Heart left ventricle (tissue), 16 donors: ENCODE measurements at regions of chr4 and their contacts with region 1.

Region 1: DNA sequence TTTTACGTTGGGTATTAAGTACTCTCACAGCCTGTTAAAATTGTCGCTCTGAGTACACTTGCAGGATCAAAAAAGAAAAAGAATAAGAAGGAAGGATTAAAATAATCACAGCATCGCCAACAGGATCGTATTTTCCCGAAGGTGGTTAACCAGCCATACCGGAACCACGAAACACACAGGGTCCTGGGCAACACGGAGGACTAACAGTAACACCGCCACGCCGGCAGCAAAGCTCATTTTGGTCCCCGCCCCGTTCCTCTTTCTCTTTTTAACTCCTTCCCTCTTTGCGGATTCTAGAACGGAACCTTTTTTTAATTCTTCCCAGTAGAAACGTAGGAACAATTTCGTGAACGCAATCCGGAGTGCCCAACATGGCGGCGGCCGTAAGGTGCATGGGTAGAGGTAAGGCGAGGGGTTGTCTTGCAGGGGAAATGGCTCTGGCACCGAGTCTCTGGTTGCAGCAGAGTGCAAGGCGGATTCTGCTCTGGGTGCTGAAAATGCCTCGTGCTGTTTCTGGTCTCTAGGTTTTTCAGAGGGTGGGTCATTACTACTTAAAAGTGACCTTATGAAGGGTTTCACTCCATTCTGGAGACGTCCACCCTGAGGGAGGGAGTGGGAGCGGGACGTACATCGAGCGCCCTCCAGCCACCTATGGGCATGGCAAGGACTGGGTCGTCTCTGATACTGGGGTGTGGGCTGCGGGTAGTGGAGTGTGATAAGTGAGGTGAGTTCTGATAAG is at the start of gene MRPL1:
- DNase-seq: peak; percentile 88 to 92 (median 91)
- ATAC-seq: peak; percentile 96 to 97 (median 97)
- H3K4me3 ChIP-seq: peak within 1 kb of the TSS; percentile 30 to 90 (median 73)
- H3K27ac ChIP-seq: peak within 1 kb of the TSS; percentile 90 to 99 (median 96)
- H3K4me1 ChIP-seq: peaks cover 0 to 19% (median 11%) of the 10 kb centered on the region in 12 donors
- H3K27me3 ChIP-seq: no peaks in the 10 kb centered on the region
- CTCF ChIP-seq: peak in 3 of 12 donors; percentile 4 to 15 (median 14)
- POLR2A ChIP-seq: peak in 1 of 2 donors; percentile 42
- total RNA-seq, gene MRPL1: 26.9 to 47.6 (median 40.2) TPM

Region 2: DNA sequence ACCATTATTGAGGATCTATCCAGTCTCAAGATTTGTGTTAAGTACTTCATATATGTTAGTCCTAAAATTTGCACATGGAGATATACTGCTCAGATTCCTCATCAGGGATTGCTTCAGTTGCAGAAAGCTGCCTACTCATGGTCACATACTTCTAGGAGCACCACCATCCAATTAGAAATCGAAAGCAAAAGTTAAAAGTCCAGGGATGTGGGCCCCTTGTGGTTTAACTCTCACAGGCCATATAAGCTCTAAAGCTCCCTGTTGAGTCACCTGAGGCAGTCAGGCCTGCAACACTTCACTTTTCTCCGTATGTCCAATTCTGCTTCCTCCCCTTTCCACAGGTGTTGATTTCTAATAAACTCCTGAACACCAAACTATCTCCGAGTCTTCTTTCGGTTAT is 127.7 kb before region 1 on chr4:
- intact Hi-C with region 1: loop called in 1 of 10 experiments (anchors 10 kb)
- DNase-seq: no peak
- ATAC-seq: peak in 1 of 4 donors; percentile 72
- H3K4me3 ChIP-seq: peak overlapping the region in 1 of 12 donors; percentile 12
- H3K27ac ChIP-seq: peak overlapping the region in 1 of 12 donors; percentile 25
- H3K4me1 ChIP-seq: peaks cover 0 to 51% (median 9%) of the 10 kb centered on the region in 12 donors
- H3K27me3 ChIP-seq: no peaks in the 10 kb centered on the region
- CTCF ChIP-seq: no peak
- POLR2A ChIP-seq: no peak